Endothelial cell of umbilical vein (primary cell): ENCODE measurements at regions of chr10 and their contacts with region 1.

Region 1: DNA sequence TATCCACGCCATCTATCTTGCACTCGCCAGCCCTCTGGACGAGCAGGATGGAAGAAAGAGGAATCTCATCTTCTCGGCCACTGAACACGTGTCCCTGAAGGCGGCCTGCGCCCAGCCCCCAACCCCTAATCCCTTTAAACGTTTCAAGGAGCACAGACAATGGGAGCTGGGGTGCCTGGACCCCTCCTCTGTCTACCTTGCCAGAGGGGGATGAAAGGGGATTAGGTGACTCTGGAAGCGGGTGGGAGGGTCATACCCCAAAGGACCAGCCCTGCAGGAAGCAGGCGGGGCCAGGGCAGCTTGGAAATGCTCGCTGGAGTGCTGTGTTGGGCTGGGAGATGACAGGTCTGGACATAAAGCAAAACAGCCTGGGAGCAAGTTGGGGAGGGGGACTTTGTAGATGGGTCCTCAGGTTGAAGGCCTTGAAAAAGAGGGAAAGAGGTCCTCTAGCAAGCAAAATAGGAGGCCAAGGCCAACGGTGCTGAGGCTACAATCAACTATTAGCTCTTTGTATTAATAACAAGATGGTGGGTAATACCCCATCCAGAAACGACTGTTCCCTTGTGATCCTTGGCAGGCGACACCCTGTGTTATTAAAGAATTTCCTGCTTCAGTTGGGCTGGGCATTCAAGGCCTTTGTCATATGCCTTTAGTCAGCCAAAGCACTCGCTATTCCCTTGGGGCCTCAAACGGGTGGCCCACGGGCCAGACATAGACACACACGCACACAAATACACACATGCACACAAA is 126.5 kb upstream of the UNC5B start:
- DNase-seq: no peak
- H3K4me3 ChIP-seq: no peak overlapping the region
- H3K27ac ChIP-seq: no peak overlapping the region
- H3K4me1 ChIP-seq: no peaks in the 10 kb centered on the region
- H3K27me3 ChIP-seq: peaks cover 3 to 6% of the 10 kb centered on the region in 2 experiments
- CTCF ChIP-seq: no peak
- POLR2A ChIP-seq: no peak

Region 2: DNA sequence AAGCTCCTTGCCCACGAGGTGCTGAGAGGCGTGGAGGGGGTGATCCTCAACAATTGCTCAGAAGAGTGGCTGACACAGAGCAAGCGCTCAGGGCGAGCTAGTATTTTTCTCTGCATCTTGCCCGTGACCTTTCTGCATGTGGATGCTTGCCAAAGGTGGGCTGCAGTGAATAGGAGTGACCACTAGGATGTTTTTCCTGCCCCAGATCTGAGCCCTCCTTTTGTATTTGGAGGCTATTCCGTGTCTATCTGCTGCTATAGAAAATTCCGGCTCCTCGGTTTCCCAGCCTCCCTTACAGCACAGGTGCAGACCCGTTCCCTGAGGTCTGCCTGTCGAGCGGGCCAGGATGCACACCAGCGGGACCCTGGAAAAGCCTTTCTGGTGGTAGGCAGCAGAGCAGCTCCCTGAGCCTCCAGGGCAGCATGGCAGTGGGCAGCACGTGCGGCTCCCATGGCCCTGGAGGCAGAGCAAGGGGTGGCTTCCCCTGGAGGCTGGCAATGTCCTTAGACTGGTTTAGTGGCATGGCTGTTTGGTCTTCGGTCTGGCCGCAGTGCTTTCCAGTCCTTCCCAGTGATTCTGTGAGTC is 52.4 kb before region 1 on chr10:
- CTCF ChIA-PET with region 1: no interaction called
- POLR2A ChIA-PET with region 1: no interaction called
- dilution Hi-C with region 1: no loop called
- intact Hi-C with region 1: no loop called
- DNase-seq: no peak
- H3K4me3 ChIP-seq: no peak overlapping the region
- H3K27ac ChIP-seq: no peak overlapping the region
- H3K4me1 ChIP-seq: no peaks in the 10 kb centered on the region
- H3K27me3 ChIP-seq: peaks cover 0 to 11% of the 10 kb centered on the region in 2 experiments
- CTCF ChIP-seq: no peak
- POLR2A ChIP-seq: no peak

Region 3: DNA sequence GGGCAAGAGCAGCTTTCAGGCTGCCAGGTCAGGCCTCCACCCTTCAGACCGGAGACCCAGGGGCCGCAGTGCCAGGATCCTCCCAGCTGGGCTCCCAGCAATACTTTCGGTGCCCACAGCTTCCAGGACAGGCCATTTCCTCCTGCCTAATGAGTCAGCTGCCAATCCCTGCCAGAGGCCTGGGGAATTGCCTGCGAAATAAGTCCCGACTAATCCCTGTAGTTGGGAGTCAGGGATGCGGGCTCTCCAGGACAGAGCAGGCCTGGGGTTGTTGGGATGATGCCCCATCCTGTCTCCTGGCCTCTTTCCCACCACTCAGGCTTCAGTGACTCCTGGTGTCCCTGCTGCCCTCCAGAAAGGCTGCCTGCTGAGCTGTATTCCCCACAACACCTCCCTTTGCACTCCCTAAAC is 17.0 kb before region 1 on chr10:
- CTCF ChIA-PET with region 1: no interaction called
- POLR2A ChIA-PET with region 1: no interaction called
- dilution Hi-C with region 1: no loop called
- intact Hi-C with region 1: no loop called
- DNase-seq: peak; percentile 56
- H3K4me3 ChIP-seq: no peak overlapping the region
- H3K27ac ChIP-seq: no peak overlapping the region
- H3K4me1 ChIP-seq: peaks cover 6% of the 10 kb centered on the region
- H3K27me3 ChIP-seq: no peaks in the 10 kb centered on the region
- CTCF ChIP-seq: no peak
- POLR2A ChIP-seq: no peak

Region 4: DNA sequence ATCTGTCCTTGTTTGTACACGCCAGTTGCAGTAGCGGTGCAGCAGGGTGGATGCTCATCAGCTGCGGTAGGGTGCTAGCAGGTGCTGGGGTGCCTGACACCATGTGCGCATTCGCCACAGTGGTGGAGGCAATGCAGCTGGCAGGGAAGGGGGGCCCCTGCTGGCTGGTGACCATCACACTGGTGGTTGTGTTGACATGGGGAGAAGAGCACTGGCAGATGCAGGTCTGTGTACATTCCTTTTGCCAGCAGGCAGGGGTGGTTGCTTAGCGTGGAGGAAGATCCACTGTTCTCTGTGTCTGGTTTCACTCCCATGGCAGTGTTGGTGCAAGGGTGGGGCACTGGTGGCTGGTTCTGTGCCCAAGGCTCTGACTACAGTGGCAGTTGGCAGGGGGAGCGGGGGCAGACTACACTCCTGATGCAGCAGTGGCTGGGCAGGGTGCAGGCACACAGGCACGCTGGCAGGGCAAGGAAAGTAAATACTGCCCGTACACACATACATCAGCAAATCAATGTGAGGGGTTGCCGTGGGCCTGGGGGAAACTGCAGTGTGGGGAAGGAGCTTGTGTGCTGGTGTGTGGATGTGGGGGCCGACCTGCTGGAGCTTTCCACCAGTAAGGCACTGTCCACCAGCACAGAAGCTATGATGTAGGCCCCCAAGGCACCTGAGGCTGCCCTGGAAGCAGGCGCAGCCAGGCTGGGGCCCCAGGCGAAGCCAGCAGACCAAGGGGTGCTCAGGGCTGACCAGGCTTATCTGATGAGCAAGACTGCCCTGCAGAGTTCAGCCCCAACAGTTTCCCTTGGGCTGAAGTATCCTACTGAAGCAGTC is 39.3 kb after region 1 on chr10:
- CTCF ChIA-PET with region 1: no interaction called
- POLR2A ChIA-PET with region 1: no interaction called
- dilution Hi-C with region 1: no loop called
- intact Hi-C with region 1: loop called (anchors 1 kb)
- DNase-seq: no peak
- H3K4me3 ChIP-seq: no peak overlapping the region
- H3K27ac ChIP-seq: no peak overlapping the region
- H3K4me1 ChIP-seq: peaks cover 4% of the 10 kb centered on the region
- H3K27me3 ChIP-seq: peaks cover 13 to 26% of the 10 kb centered on the region in 2 experiments
- CTCF ChIP-seq: no peak
- POLR2A ChIP-seq: no peak